ENCODE measurements at regions of chr9 and their contacts with region 1.

Region 1: DNA sequence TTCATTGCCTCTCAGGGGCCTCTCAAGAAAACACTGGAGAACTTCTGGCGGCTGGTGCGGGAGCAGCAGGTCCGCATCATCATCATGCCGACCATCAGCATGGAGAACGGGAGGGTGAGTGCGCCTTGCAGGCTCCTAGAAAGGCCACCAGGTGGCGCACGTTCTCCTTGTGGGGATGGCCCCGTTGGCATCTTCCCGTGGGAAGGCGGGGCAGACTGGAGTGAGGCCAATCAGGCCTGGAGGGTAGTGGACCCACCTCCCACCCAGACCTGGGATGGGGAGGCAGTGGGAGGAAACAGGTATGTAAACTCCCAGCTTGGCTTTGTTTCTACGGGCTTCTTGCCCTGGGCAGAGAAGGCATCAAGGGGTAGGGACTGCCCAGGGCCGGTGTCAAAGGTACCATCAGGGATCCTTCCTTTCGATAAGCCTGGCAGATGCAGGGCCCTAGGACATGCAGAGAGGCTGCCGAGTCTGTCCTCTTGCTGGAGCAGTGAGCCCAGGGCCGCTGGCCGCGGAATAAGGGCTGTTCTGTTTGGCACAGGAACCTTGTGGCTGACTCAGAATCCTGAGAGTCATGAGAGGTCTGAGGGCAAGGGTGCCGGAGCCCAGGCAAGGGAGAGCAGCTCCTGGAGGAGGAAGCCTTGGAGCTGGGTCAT is 18.9 kb upstream of the SPTLC1 start:
- DNase-seq: peak; percentile 86
- H3K4me3 Mint-ChIP-seq: peak overlapping the region; percentile 52
- H3K27ac Mint-ChIP-seq: no peak overlapping the region
- H3K4me1 Mint-ChIP-seq: peaks cover 10% of the 10 kb centered on the region
- H3K27me3 Mint-ChIP-seq: peaks cover 71% of the 10 kb centered on the region

Region 2: GRCh38 chr9:92001244-92001643 is 132.8 kb before region 1 on chr9:
- CTCF ChIA-PET with region 1: no interaction called
- DNase-seq: no peak
- H3K4me3 Mint-ChIP-seq: no peak overlapping the region
- H3K27ac Mint-ChIP-seq: no peak overlapping the region
- H3K4me1 Mint-ChIP-seq: no peaks in the 10 kb centered on the region
- H3K27me3 Mint-ChIP-seq: peaks cover 6% of the 10 kb centered on the region

Region 3: GRCh38 chr9:92077888-92078287 is 56.2 kb before region 1 on chr9:
- CTCF ChIA-PET with region 1: no interaction called
- DNase-seq: no peak
- H3K4me3 Mint-ChIP-seq: no peak overlapping the region
- H3K27ac Mint-ChIP-seq: no peak overlapping the region
- H3K4me1 Mint-ChIP-seq: no peaks in the 10 kb centered on the region
- H3K27me3 Mint-ChIP-seq: no peaks in the 10 kb centered on the region

Region 4: DNA sequence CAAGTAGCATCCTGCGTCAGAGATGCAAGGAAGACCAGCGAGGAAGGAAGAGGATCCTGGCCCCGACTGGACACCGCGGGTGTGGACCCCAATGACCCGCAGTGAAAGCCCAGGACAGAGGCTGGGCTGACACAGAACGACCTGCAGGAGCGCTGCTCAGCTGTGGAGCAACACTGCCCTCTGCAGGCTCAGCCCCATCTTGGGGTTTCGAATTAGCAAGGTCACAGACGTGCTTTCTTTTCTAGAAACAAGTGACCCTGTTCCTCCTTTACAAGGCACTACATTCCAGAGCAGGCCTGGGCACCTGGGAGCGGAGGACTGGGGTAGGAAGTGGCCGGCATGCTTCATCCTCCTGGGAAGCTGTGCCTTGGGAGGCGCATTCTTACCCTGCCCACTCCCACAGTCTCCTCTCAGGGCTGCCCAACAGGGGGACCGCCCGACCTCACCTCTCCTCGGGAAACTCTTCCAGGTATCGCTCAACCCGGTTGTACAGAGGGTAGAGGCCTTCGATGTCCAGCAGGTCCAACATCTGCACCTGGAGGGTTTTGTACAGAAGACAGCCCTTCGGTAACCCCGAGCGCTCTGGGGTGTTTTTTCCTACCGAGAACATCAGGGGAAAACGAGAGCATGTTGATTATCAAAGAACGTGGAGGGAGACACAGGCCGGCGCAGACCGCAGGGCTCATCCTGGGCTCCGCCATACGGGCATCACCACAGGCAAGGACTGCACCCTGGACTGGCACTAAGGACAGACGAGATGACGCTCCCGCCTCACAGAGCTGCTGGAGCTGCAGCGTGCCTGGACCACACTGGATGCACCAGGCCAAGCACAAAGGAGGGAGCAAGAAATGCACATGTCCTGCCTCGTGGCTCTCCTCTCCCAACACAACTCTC is 500.9 kb after region 1 on chr9:
- CTCF ChIA-PET with region 1: interaction called, 69 read pairs
- DNase-seq: peak; percentile 80
- H3K4me3 Mint-ChIP-seq: no peak overlapping the region
- H3K27ac Mint-ChIP-seq: no peak overlapping the region
- H3K4me1 Mint-ChIP-seq: no peaks in the 10 kb centered on the region
- H3K27me3 Mint-ChIP-seq: no peaks in the 10 kb centered on the region